Dorsolateral prefrontal cortex (tissue), 120 donors: ENCODE measurements at regions of chr1 and their contacts with region 1.

Region 1: GRCh38 chr1:234139966-234140365 is 233.3 kb upstream of the COA6 start:
- DNase-seq: no peak
- H3K4me3 ChIP-seq: no peak overlapping the region
- H3K27ac ChIP-seq: no peak overlapping the region
- H3K27me3 ChIP-seq: peaks cover 0 to 2% (median 0%) of the 10 kb centered on the region in 45 donors
- CTCF ChIP-seq: no peak

Region 2: GRCh38 chr1:234235434-234235881 is 95.5 kb after region 1 on chr1:
- intact Hi-C with region 1: no loop called
- DNase-seq: no peak
- H3K4me3 ChIP-seq: no peak overlapping the region
- H3K27ac ChIP-seq: no peak overlapping the region
- H3K27me3 ChIP-seq: peaks cover 0 to 3% (median 0%) of the 10 kb centered on the region in 45 donors
- CTCF ChIP-seq: no peak

Region 3: GRCh38 chr1:234295068-234295467 is 155.1 kb after region 1 on chr1:
- intact Hi-C with region 1: loop called in 1 of 2 experiments (anchors 10 kb)
- DNase-seq: no peak
- H3K4me3 ChIP-seq: no peak overlapping the region
- H3K27ac ChIP-seq: peak overlapping the region in 44 of 59 donors; percentile 2 to 80 (median 56)
- H3K27me3 ChIP-seq: peaks cover 0 to 5% (median 0%) of the 10 kb centered on the region in 45 donors
- CTCF ChIP-seq: no peak